ENCODE measurements at regions of chr18 and their contacts with region 1.

Region 1: GRCh38 chr18:74773171-74773624 is 175.5 kb downstream of the ZNF407 start:
- DNase-seq: no peak
- ATAC-seq: no peak
- H3K4me3 ChIP-seq: no peak overlapping the region
- H3K27ac ChIP-seq: no peak overlapping the region
- H3K4me1 ChIP-seq: peaks cover 0 to 1% of the 10 kb centered on the region in 2 donors
- H3K27me3 ChIP-seq: no peaks in the 10 kb centered on the region
- CTCF ChIP-seq: no peak
- POLR2A ChIP-seq: no peak

Region 2: GRCh38 chr18:74714791-74715190 is 58.4 kb before region 1 on chr18:
- in situ Hi-C with region 1: loop called in 1 of 4 experiments (anchors 10 kb)
- intact Hi-C with region 1: no loop called
- DNase-seq: no peak
- ATAC-seq: no peak
- H3K4me3 ChIP-seq: no peak overlapping the region
- H3K27ac ChIP-seq: no peak overlapping the region
- H3K4me1 ChIP-seq: no peaks in the 10 kb centered on the region
- H3K27me3 ChIP-seq: no peaks in the 10 kb centered on the region
- CTCF ChIP-seq: no peak
- POLR2A ChIP-seq: no peak

Measured in gastrocnemius medialis (tissue), 4 donors.